ENCODE measurements at regions of chr6 and their contacts with region 1.

Region 1: DNA sequence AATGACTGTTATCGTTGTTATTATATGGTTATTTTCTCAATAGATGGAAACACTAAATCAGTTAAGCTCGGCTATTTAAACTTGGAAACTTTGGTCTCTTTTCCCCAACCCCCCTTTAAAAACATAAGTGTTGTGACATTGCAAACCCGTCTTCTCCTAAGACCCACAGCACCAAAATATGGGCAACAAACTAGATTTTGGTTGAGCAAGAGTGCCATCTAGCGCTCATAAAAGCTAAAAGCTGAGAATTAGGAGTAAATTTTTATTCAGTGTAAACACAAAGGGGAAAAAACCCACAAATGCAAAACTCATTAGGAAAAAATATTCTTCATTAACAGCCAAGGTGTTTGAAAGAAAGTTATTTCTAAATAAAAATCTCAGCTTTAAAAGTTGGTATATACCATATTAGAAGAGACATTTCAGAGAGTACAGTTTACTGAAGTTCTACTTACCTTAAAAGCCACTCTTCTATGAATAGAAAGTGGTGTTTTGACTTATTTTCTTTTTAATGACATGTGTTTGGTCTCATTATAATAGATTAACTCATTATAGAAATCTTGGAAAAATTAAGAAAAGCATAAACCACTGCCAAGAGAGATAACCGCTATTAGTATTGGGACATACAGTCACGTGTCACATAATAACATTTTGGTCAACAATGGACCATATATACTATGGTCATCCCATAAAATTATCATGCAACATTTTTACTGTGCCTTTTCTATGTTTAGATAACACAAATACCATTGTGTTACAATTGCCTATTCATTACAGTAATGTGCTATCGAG is 21.1 kb downstream of the SESN1 start:
- DNase-seq: peak in 2 of 5 donors; percentile 42 to 46
- ATAC-seq: peak; percentile 43 to 64 (median 58)
- H3K4me3 ChIP-seq: no peak overlapping the region
- H3K27ac ChIP-seq: peak overlapping the region in 6 of 12 donors; percentile 2 to 34 (median 22)
- H3K4me1 ChIP-seq: peaks cover 0 to 63% (median 26%) of the 10 kb centered on the region in 12 donors
- H3K27me3 ChIP-seq: no peaks in the 10 kb centered on the region
- CTCF ChIP-seq: peak; percentile 48 to 79 (median 66)
- POLR2A ChIP-seq: no peak

Region 2: GRCh38 chr6:108541838-108542759 is 531.4 kb before region 1 on chr6:
- intact Hi-C with region 1: loop called (anchors 1 to 5 kb)
- DNase-seq: peak; percentile 61 to 76 (median 70)
- ATAC-seq: peak; percentile 54 to 86 (median 80)
- H3K4me3 ChIP-seq: no peak overlapping the region
- H3K27ac ChIP-seq: no peak overlapping the region
- H3K4me1 ChIP-seq: peaks cover 0 to 14% (median 0%) of the 10 kb centered on the region in 12 donors
- H3K27me3 ChIP-seq: no peaks in the 10 kb centered on the region
- CTCF ChIP-seq: peak; percentile 68 to 92 (median 89)
- POLR2A ChIP-seq: no peak

Region 3: GRCh38 chr6:108835218-108835850 is 238.2 kb before region 1 on chr6:
- intact Hi-C with region 1: loop called in 7 of 10 experiments (anchors 5 to 10 kb)
- DNase-seq: peak; percentile 85 to 91 (median 88)
- ATAC-seq: peak; percentile 78 to 96 (median 94)
- H3K4me3 ChIP-seq: no peak overlapping the region
- H3K27ac ChIP-seq: peak overlapping the region in 4 of 12 donors; percentile 3 to 34 (median 14)
- H3K4me1 ChIP-seq: peaks cover 0 to 39% (median 1%) of the 10 kb centered on the region in 12 donors
- H3K27me3 ChIP-seq: no peaks in the 10 kb centered on the region
- CTCF ChIP-seq: peak in 11 of 12 donors; percentile 85 to 98 (median 95)
- POLR2A ChIP-seq: no peak

Region 4: GRCh38 chr6:108896111-108896661 is 177.4 kb before region 1 on chr6:
- intact Hi-C with region 1: loop called in 8 of 10 experiments (anchors 2 to 5 kb)
- DNase-seq: no peak
- ATAC-seq: peak in 3 of 4 donors; percentile 29 to 45 (median 31)
- H3K4me3 ChIP-seq: no peak overlapping the region
- H3K27ac ChIP-seq: peak overlapping the region; percentile 40 to 90 (median 66)
- H3K4me1 ChIP-seq: peaks cover 0 to 58% (median 26%) of the 10 kb centered on the region in 12 donors
- H3K27me3 ChIP-seq: no peaks in the 10 kb centered on the region
- CTCF ChIP-seq: no peak
- POLR2A ChIP-seq: no peak

Region 5: DNA sequence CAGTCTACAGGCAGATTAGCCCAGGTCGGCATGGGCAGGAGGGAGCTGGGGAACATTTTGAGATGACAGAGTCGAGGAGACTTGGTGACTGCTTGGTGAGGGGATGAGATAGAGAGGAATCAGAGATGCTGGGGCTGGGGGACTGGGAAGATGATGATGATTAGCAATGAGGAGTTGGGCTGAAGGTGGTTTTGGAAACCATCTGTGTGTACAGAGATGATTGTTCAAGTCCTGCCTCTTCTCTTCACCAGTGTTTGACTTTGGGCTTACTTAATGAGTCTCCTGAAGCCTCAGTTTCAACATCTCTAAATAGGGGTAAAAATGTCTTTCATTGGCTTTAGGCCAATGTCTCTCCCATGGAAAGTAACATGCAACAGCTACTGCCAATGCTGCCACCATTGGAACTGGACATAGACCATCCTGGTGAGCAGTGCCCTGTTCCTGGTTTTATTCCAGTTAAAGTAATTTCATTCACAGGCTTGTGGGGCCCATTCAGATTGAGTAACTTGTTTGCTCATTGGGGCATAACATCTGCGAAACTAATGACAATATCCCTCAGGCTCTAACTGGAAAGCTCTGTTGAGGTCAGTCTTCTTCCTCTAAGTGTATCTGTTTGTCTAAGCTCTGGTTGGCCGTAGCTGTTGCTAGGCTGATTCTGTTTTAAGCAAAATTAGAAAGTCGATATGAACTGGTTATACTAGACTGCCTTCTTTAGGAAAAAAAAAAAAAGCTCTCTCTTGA is 126.3 kb before region 1 on chr6:
- intact Hi-C with region 1: loop called in 5 of 10 experiments (anchors 5 to 10 kb)
- DNase-seq: peak in 1 of 5 donors; percentile 43
- ATAC-seq: peak in 3 of 4 donors; percentile 35 to 55 (median 48)
- H3K4me3 ChIP-seq: no peak overlapping the region
- H3K27ac ChIP-seq: peak overlapping the region; percentile 83 to 97 (median 94)
- H3K4me1 ChIP-seq: peaks cover 12 to 73% (median 65%) of the 10 kb centered on the region in 12 donors
- H3K27me3 ChIP-seq: no peaks in the 10 kb centered on the region
- CTCF ChIP-seq: peak in 1 of 12 donors; percentile 9
- POLR2A ChIP-seq: peak in 1 of 2 donors; percentile 37

Region 6: DNA sequence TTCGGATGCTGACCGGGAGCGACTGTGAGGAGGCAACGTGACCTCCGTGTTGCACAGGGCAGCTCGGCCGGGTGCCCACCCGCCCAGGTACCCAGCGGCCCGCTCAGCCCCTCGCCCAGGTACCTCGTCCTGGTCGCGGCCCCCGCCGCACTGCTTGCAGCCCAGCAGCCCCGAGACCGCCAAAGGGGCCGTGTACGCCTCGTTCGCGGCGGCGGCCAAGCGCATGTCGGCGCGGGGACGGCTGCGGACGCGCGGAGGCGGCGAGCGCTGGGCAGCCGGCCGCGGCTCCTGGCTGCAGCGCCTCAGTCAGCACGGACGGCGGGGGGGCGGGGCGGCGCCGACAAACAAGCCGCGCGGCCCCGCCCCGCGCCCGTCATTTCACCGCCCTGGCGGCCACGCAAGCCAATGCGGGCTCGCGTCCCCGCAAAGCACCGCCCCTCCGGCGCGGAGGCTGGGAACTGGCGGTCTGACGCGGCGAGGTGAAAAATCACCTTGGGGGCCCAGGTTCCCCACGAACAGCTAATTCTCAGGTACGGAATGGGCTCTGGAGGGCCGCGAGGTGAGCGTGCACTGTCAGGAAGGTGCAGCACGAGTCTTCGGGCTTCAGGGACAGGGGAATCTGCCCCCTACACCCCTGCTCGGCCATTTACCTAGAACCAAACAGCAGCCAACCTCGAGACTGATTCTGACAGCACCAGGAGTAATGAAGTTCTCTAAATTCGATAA is 64.1 kb before region 1 on chr6:
- intact Hi-C with region 1: loop called in 4 of 10 experiments (anchors 5 to 10 kb)
- DNase-seq: peak; percentile 95 to 98 (median 96)
- ATAC-seq: peak; percentile 86 to 99 (median 96)
- H3K4me3 ChIP-seq: peak overlapping the region; percentile 61 to 93 (median 85)
- H3K27ac ChIP-seq: peak overlapping the region; percentile 85 to 98 (median 93)
- H3K4me1 ChIP-seq: peaks cover 0 to 84% (median 37%) of the 10 kb centered on the region in 12 donors
- H3K27me3 ChIP-seq: no peaks in the 10 kb centered on the region
- CTCF ChIP-seq: peak in 9 of 12 donors; percentile 8 to 50 (median 29)
- POLR2A ChIP-seq: peak; percentile 73 to 96

Measured in heart left ventricle (tissue), 16 donors.